ENCODE measurements at regions of chr19 and their contacts with region 1.

Region 1: GRCh38 chr19:16143399-16144245 is at the start of gene HSH2D:
- DNase-seq: peak; percentile 88
- ATAC-seq: peak; percentile 99
- H3K4me3 Mint-ChIP-seq: peak within 1 kb of the TSS; percentile 99
- H3K27ac Mint-ChIP-seq: peak within 1 kb of the TSS; percentile 100
- H3K4me1 Mint-ChIP-seq: peaks cover 46% of the 10 kb centered on the region
- H3K27me3 Mint-ChIP-seq: no peaks in the 10 kb centered on the region
- total RNA-seq, gene HSH2D: 72.5 to 80.6 TPM

Region 2: DNA sequence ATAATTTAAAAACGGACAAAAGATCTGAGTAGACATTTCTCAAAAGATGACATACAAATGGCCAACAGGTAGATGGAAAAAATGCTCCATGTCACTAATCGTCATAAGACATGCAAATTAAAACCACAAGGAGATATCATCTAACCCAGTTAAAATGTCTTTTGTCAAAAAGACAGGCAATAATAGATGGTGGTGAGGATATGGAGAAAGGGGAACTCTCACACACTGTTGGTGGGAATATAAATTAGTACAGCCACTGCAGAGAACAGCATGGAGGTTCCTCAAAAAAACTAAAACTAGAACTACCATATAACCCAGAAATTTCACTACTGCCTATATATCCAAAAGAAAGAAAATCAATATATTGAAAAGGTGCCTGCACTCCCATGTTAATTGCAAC is 156.9 kb before region 1 on chr19:
- POLR2A ChIA-PET with region 1: no interaction called
- DNase-seq: no peak
- ATAC-seq: no peak
- H3K4me3 Mint-ChIP-seq: no peak overlapping the region
- H3K27ac Mint-ChIP-seq: no peak overlapping the region
- H3K4me1 Mint-ChIP-seq: peaks cover 6% of the 10 kb centered on the region
- H3K27me3 Mint-ChIP-seq: peaks cover 34% of the 10 kb centered on the region

Region 3: GRCh38 chr19:16070366-16070990 is 73.1 kb before region 1 on chr19:
- POLR2A ChIA-PET with region 1: interaction called, 21 read pairs
- DNase-seq: peak; percentile 72
- ATAC-seq: peak; percentile 95
- H3K4me3 Mint-ChIP-seq: no peak overlapping the region
- H3K27ac Mint-ChIP-seq: no peak overlapping the region
- H3K4me1 Mint-ChIP-seq: peaks cover 42% of the 10 kb centered on the region
- H3K27me3 Mint-ChIP-seq: no peaks in the 10 kb centered on the region

Region 4: DNA sequence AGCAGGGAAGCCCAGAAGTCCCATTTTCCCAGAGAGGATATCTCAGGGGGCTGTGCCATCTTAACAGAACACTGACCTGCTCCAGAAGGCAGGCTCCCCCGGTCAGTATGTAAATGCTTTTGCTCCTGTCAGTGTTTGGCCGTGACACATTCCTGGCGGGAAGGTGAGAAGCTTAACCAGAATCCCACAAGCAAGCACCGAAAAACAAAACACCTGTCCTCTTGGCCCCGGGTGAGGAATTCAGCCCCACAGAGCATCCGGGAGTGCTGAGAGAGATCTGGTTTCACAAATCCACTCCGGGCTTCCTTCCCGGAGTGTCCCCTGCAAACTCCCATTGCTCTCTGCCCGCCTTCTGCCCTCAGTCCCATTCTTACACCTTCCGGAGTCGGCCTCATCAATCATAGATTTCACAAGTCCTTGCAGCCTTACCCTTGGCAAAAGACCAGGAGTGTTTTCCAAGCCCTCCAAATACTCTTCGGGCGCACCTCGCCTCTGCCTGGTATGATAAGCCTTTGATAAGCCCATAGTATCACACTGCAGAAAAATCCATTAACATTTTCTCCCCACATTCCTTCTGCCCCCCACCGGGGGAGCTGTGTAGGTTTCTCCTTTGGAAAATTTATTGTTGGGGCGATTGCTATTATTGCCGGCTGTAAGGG is 55.1 kb before region 1 on chr19:
- POLR2A ChIA-PET with region 1: interaction called, 15 read pairs
- DNase-seq: no peak
- ATAC-seq: no peak
- H3K4me3 Mint-ChIP-seq: no peak overlapping the region
- H3K27ac Mint-ChIP-seq: peak overlapping the region; percentile 67
- H3K4me1 Mint-ChIP-seq: peaks cover 47% of the 10 kb centered on the region
- H3K27me3 Mint-ChIP-seq: no peaks in the 10 kb centered on the region

Region 5: GRCh38 chr19:16118489-16119033 is 25.1 kb before region 1 on chr19:
- POLR2A ChIA-PET with region 1: interaction called, 31 read pairs
- DNase-seq: peak; percentile 46
- ATAC-seq: peak; percentile 46
- H3K4me3 Mint-ChIP-seq: peak overlapping the region; percentile 62
- H3K27ac Mint-ChIP-seq: peak overlapping the region; percentile 91
- H3K4me1 Mint-ChIP-seq: peaks cover 51% of the 10 kb centered on the region
- H3K27me3 Mint-ChIP-seq: no peaks in the 10 kb centered on the region

Region 6: DNA sequence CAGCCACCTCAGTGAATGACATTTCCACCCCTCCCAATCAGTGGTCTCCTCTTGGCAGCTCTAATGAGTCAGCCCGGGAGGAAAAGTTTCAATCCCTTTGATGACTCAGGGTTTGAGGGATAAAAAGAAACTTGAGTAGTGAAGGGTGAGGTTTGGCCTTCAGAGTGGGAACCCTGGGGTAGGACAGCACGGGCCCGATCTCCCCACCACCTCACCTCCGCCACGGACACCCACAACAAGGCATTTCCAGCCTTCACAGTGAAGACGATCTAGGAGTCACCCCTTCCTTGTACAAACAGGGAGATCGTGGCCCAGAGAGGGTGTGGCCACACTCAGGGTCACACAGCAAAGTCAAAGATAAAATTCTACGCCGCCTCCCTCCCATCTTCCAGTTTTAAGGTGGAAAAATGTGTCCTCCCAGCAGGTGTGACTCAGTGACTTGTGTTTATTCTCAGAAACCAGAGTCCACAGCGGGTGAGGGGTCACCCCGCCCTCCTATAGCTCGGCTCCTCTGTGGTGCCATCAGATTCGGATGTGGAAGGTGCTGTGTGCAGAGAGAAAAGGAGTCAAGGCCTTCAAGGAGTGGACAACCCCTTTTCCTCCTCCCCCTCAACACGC is 17.4 kb after region 1 on chr19:
- POLR2A ChIA-PET with region 1: interaction called, 31 read pairs
- DNase-seq: no peak
- ATAC-seq: peak; percentile 45
- H3K4me3 Mint-ChIP-seq: no peak overlapping the region
- H3K27ac Mint-ChIP-seq: peak overlapping the region; percentile 34
- H3K4me1 Mint-ChIP-seq: peaks cover 20% of the 10 kb centered on the region
- H3K27me3 Mint-ChIP-seq: no peaks in the 10 kb centered on the region

Region 7: DNA sequence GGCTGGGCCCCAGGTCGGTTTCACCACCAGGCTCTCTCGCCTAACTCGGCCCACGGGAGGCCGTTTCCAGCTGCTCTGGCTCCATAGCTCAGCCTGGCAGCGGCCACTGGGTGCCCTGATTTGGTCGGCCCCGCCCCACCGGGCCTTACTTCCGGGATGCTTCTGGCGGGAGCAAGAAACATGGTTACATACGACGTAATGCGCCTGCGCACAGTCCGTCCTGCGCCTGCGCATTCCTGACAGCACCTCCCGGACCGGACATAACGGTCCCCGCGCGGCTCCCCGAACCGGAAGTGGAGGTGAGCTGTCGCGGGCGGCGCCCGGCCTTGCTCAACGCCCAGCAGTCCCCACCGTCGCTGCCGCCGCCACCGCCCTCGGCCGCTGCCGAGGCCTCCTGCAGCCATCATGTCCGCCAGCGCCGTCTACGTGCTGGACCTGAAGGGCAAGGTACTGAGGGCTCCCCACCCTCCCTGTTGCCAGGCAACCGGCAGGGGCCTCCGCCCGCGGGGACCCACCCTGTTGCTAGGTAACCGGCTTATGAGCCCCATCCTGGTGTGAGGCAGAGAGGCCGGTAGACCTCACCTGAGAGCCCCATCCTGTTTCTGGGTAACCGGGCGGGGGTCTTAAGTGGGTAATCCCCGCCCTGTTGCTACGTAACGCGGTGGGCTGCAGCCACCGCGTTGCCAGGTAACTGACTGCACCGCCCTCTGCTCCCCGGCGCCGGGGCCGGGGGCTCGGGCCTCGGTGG is 54.2 kb after region 1 on chr19 and contains the start of gene AP1M1:
- POLR2A ChIA-PET with region 1: interaction called, 16 read pairs
- DNase-seq: peak; percentile 99
- ATAC-seq: peak; percentile 89
- H3K4me3 Mint-ChIP-seq: peak within 1 kb of the TSS; percentile 98
- H3K27ac Mint-ChIP-seq: peak within 1 kb of the TSS; percentile 97
- H3K4me1 Mint-ChIP-seq: peaks cover 35% of the 10 kb centered on the region
- H3K27me3 Mint-ChIP-seq: no peaks in the 10 kb centered on the region
- total RNA-seq, gene AP1M1: 132 to 135 TPM

Measured in activated naive CD8-positive, alpha-beta T cell treated with anti-CD3 and anti-CD28 coated beads, Interleukin-2, amount 10 ng/mL, durations not matched to agents 7 days and 5 days (primary cell).